Activated CD4-positive, alpha-beta T cell treated with anti-CD3 and anti-CD28 coated beads for 36 hours (primary cell): ENCODE measurements at regions of chr7 and their contacts with region 1.

Region 1: DNA sequence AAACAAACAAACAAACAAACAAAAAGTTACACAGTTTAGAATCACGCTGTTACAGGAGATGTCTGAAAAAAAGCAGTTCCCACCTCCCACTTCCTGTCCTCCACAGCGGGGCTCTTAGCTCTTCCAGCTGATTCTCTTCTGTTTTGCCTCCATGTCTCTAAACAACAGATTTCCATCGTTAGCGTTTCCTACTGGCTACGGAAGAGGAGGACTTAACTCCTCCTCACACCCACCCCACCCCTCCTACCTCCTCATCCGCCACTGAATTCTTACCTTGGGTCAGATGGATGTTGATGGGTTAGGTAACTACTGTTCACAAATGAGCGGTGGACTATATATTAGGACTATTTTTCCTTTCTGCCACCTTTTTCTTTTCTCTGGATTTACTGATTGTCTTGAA is 36.8 kb upstream of the NUB1 start:
- DNase-seq: no peak
- ATAC-seq: no peak
- H3K4me3 Mint-ChIP-seq: no peak overlapping the region
- H3K27ac Mint-ChIP-seq: peak overlapping the region; percentile 3
- H3K4me1 Mint-ChIP-seq: peaks cover 8% of the 10 kb centered on the region
- H3K27me3 Mint-ChIP-seq: peaks cover 23% of the 10 kb centered on the region

Region 2: GRCh38 chr7:151123822-151124464 is 180.9 kb before region 1 on chr7:
- CTCF ChIA-PET with region 1: interaction called, 6 read pairs
- POLR2A ChIA-PET with region 1: no interaction called
- intact Hi-C with region 1: loop called (anchors 1 kb)
- DNase-seq: peak; percentile 91
- ATAC-seq: peak; percentile 99
- H3K4me3 Mint-ChIP-seq: no peak overlapping the region
- H3K27ac Mint-ChIP-seq: no peak overlapping the region
- H3K4me1 Mint-ChIP-seq: peaks cover 5% of the 10 kb centered on the region
- H3K27me3 Mint-ChIP-seq: no peaks in the 10 kb centered on the region

Region 3: GRCh38 chr7:151172273-151173141 is 132.3 kb before region 1 on chr7:
- CTCF ChIA-PET with region 1: interaction called, 4 read pairs
- POLR2A ChIA-PET with region 1: no interaction called
- intact Hi-C with region 1: loop called (anchors 1 to 5 kb)
- DNase-seq: peak; percentile 90
- ATAC-seq: peak; percentile 74
- H3K4me3 Mint-ChIP-seq: no peak overlapping the region
- H3K27ac Mint-ChIP-seq: no peak overlapping the region
- H3K4me1 Mint-ChIP-seq: peaks cover 8% of the 10 kb centered on the region
- H3K27me3 Mint-ChIP-seq: peaks cover 48% of the 10 kb centered on the region

Region 4: DNA sequence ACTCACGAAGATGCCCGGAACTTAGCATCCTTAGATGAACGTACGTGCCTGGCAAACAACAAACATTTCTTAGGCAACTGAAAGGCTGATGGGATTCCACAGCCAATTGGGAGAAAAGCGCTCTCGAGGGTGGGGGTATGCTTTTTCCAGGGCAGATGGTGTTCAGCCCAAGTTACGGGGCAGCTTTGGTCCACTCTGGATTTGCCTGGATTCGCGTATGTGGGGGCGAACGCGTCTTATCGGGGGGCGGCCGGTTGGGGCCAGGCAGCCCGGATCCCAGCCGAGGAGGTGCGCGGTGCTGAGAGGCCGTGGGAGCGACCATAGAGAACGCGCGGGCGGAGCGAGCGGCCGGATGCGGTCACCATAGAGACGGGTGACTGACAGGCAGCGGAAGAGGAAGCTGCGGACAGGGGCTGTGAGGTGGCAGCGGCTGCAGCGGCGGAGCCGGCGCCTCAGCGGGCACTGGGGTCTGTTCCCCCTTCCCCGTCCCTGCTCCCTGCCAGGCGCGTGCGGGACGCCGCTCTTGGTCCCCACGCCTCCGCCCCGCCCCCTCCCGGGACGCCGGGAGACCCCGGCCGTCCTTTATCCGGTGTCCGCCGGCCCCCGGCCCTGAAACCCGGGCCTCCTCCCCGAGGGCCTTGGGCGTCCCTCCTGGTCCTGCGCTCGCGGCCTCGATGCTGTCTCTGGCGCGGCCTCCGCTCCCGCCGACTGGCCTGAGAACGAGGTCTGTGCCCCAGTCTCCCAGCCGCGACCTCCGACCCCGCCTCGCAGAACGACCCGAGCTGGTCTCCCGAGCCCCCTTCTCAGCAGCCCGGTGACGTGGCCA is 72.6 kb before region 1 on chr7 and contains the start of gene CHPF2:
- CTCF ChIA-PET with region 1: interaction called, 4 read pairs
- POLR2A ChIA-PET with region 1: no interaction called
- intact Hi-C with region 1: loop called in 1 of 2 experiments (anchors 1 kb)
- DNase-seq: peak; percentile 95
- ATAC-seq: peak; percentile 90
- H3K4me3 Mint-ChIP-seq: peak within 1 kb of the TSS; percentile 98
- H3K27ac Mint-ChIP-seq: peak within 1 kb of the TSS; percentile 99
- H3K4me1 Mint-ChIP-seq: peaks cover 34% of the 10 kb centered on the region
- H3K27me3 Mint-ChIP-seq: no peaks in the 10 kb centered on the region
- total RNA-seq, gene CHPF2: 20.7 to 27.3 TPM

Region 5: GRCh38 chr7:151244196-151244840 is 60.5 kb before region 1 on chr7:
- CTCF ChIA-PET with region 1: interaction called, 12 read pairs
- POLR2A ChIA-PET with region 1: no interaction called
- intact Hi-C with region 1: loop called (anchors 1 to 2 kb)
- DNase-seq: peak; percentile 81
- ATAC-seq: peak; percentile 27
- H3K4me3 Mint-ChIP-seq: peak overlapping the region; percentile 58
- H3K27ac Mint-ChIP-seq: no peak overlapping the region
- H3K4me1 Mint-ChIP-seq: peaks cover 36% of the 10 kb centered on the region
- H3K27me3 Mint-ChIP-seq: peaks cover 23% of the 10 kb centered on the region

Region 6: DNA sequence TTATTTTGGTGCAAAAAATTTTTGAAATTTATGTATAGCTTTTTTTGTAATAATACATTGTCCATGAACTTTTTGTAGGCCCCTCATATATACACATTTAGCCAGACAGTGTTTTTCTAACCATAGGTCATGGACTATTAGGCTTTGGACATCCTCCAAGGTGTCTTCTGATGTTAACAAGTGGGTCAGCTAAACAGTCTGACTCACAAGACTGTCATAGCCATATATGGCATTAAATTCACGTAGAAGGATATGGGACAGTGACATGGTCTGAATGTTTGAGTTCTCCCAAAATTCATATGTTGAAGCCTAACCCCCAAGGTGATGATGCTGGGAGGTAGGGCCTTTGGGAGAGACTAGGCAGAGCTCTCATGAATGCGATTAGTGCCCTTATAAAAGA is 22.8 kb after region 1 on chr7:
- CTCF ChIA-PET with region 1: interaction called, 26 read pairs
- POLR2A ChIA-PET with region 1: no interaction called
- intact Hi-C with region 1: no loop called
- DNase-seq: no peak
- ATAC-seq: no peak
- H3K4me3 Mint-ChIP-seq: no peak overlapping the region
- H3K27ac Mint-ChIP-seq: no peak overlapping the region
- H3K4me1 Mint-ChIP-seq: no peaks in the 10 kb centered on the region
- H3K27me3 Mint-ChIP-seq: no peaks in the 10 kb centered on the region